Activated CD8-positive, alpha-beta T cell treated with anti-CD3 and anti-CD28 coated beads, Interleukin-2, amount 10 ng/mL, durations not matched to agents 7 days and 5 days (primary cell): ENCODE measurements at regions of chr12 and their contacts with region 1.

Region 1: DNA sequence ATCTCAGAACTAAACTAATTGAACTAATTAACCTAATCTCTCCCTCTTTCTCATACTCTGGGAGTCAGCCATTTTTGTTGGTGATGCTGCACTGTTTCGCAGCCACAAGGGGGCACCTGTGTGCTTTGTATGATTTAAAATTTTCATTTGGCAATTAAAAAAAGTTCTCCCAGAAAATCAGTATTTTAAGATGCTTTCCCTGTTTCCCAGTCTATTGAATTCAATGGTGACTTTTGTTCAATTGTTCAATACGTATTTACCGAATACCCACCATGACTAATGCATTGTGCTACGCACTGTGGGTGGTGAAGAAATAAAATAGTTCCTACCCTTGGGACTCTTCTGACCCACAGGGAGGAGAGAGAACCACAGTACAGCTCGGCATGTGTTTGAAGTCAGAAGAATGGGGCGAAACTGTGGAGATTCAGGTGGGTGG is 63.7 kb downstream of the ZNF664 start:
- DNase-seq: peak; percentile 53
- ATAC-seq: peak; percentile 53
- H3K4me3 Mint-ChIP-seq: no peak overlapping the region
- H3K27ac Mint-ChIP-seq: no peak overlapping the region
- H3K4me1 Mint-ChIP-seq: no peaks in the 10 kb centered on the region
- H3K27me3 Mint-ChIP-seq: peaks cover 13% of the 10 kb centered on the region

Region 2: DNA sequence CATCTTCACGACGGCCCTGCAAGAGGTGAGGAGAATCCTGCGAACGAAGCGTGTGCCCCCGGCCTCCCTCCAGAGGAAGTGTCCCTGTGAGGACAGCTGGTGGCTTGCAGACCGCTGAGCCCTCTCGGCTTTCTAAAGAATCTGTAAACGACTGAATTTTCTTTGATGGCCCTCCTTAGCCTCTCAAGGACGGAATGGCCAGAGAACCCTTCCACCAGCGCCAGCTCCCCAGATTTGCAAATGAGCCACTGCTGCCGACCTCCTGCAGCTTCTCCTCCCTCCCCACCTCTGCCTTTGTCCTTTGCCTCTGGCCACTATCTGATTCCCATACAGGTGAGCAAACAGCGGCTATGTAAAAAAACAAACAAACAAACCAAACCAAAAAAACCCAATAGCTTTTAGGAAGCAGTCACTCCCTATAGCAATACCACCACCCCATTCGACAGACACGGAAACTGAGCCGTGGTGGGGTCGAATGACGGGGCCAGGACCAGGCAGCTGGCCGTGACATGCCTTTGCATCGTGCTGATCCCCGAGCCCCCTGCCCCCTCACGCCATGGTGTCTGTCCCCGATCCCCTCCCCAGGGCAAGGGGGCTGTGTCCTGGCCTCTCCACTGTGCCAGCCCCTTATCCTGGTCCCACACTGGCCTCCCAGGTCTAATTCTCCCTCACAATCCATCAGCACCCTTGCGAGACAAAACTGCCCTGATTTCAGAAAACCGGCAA is 281.8 kb after region 1 on chr12:
- CTCF ChIA-PET with region 1: interaction called, 10 read pairs
- POLR2A ChIA-PET with region 1: no interaction called
- DNase-seq: no peak
- ATAC-seq: no peak
- H3K4me3 Mint-ChIP-seq: no peak overlapping the region
- H3K27ac Mint-ChIP-seq: no peak overlapping the region
- H3K4me1 Mint-ChIP-seq: no peaks in the 10 kb centered on the region
- H3K27me3 Mint-ChIP-seq: no peaks in the 10 kb centered on the region

Region 3: DNA sequence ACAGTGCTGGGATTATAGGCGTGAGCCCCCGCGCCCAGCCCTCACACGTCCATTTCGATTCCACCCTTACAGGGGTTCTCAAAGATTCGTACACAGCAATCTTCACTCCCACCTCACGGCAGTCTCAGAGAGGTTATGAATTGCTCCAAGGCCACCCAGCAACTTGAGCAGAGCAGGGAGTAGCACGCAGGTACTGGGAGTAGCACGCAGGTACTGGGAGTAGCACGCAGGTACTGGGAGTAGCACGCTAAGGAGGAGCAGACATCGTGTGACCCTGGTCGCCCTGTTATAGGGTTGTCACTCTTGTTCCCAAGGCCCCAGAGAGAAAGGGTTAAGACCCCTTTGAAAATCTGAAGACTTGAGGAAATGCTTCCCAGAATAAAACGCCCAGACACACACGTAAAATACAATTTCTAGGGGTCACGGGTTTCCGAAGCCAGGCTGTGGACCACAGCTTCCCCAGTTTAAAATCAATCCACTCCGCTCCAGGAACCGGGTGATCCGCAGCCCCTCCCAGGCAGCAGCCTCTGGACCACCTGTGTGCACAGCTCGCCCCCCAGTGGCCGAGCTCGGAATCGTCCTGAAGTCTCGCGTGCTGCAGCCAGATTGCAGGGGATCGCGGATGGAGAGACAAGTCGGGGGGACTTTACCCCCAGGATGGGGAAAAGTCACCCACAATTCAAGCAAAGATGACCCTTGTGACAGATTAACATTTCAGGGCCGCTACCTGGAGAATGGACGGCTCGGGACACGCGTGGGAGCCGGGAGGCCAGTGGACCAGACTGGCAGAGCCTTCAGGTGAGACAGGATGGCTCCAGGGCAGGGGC is 735.0 kb after region 1 on chr12:
- CTCF ChIA-PET with region 1: interaction called, 12 read pairs
- POLR2A ChIA-PET with region 1: no interaction called
- DNase-seq: peak; percentile 87
- ATAC-seq: peak; percentile 47
- H3K4me3 Mint-ChIP-seq: peak overlapping the region; percentile 2
- H3K27ac Mint-ChIP-seq: peak overlapping the region; percentile 11
- H3K4me1 Mint-ChIP-seq: peaks cover 41% of the 10 kb centered on the region
- H3K27me3 Mint-ChIP-seq: peaks cover 18% of the 10 kb centered on the region